Activated CD4-positive, alpha-beta T cell treated with anti-CD3 and anti-CD28 coated beads, Interleukin-2, amount 10 ng/mL, durations not matched to agents 7 days and 5 days (primary cell): ENCODE measurements at regions of chr1 and their contacts with region 1.

Region 1: GRCh38 chr1:116794804-116795481 is 40.7 kb downstream of the CD2 start:
- DNase-seq: no peak
- H3K4me3 Mint-ChIP-seq: no peak overlapping the region
- H3K27ac Mint-ChIP-seq: no peak overlapping the region
- H3K4me1 Mint-ChIP-seq: peaks cover 56% of the 10 kb centered on the region
- H3K27me3 Mint-ChIP-seq: no peaks in the 10 kb centered on the region

Region 2: DNA sequence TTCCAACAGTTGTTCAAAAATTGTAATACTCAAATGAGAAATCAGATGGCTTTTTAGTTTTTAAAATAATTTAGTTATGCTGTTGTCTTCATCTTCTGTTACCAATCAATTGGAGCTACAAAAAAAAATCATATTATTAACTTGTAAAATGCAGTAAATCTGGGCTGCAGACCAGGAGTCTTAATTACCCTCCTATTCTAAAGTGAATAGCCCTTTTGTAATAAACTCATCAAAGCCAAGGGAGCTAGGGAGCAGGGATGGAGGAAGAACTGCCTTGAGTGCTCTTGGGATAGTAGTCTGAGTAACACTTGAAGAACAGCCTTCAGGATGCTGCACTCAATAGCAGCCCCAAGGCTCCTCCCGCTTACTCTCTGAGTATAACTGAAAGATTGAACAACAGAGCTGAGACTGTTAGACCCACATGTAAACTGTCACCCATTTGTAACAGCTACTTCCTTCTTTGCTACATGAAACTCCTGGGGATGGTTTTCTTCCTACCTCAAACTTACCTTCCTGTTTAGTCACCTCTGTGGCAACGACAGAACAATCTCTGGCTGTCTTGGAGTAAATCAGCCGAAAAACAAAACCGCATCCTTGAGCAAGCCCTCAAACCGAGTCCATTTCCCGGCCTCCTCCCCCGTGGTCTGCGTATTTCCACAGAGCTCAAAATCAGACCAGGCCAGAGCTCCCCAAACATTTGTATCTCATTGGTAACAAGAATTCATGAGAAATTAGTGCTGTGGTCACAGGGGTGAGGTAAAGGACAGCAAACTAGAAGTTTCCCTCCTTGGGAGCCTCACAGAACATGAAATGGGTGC is 280.0 kb before region 1 on chr1:
- CTCF ChIA-PET with region 1: no interaction called
- POLR2A ChIA-PET with region 1: no interaction called
- DNase-seq: peak; percentile 71
- H3K4me3 Mint-ChIP-seq: peak overlapping the region; percentile 59
- H3K27ac Mint-ChIP-seq: peak overlapping the region; percentile 89
- H3K4me1 Mint-ChIP-seq: peaks cover 64% of the 10 kb centered on the region
- H3K27me3 Mint-ChIP-seq: no peaks in the 10 kb centered on the region

Region 3: DNA sequence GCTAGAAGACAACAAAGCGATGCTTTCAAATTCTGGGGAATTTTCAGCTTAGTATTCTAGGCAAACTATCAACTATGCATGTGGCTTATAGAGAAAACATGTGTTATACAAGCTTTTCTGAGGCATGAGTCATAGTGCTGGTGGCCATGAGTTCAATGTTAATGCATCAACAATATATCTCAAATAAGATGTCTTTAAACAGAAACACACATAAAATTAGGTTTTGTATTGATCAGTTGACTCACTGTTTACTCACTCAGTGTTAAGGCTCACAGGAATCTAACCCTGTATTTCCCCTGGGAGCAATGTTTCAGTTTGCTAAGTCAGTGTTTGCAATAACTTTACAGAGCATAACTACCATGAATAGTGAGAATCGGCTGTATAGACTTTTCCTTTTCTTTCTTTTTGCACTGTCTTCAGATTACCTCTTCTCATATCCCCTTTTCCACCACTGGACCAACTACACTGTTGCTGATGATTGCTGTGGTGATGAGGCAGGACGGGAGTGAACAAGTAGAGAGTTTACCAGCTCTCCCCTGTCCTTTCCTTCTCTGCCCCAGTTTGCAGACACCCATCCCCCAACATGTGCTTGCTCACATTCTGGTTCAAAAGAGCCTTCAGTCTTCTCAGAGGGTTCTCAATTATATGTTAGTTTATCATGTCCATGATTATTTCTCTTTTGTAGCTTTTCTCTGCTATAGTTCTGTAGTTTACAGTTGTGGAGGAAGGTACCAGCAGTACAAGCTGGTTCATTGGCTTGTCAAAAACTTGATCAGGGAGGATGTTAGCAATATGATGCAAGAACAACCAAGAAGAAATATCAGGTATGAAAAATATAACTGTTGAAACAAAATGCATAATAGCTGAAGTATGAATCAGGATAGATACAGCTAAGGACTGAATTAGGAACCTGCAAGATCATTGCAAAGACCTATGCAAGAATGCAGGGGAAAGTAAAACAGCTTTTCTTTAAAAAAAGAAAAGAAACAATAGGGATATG is 16.8 kb before region 1 on chr1:
- CTCF ChIA-PET with region 1: interaction called, 10 read pairs
- POLR2A ChIA-PET with region 1: no interaction called
- DNase-seq: no peak
- H3K4me3 Mint-ChIP-seq: peak overlapping the region; percentile 6
- H3K27ac Mint-ChIP-seq: peak overlapping the region; percentile 65
- H3K4me1 Mint-ChIP-seq: peaks cover 45% of the 10 kb centered on the region
- H3K27me3 Mint-ChIP-seq: no peaks in the 10 kb centered on the region

Region 4: GRCh38 chr1:116806245-116806644 is 11.3 kb after region 1 on chr1:
- CTCF ChIA-PET with region 1: interaction called, 13 read pairs
- POLR2A ChIA-PET with region 1: no interaction called
- DNase-seq: peak; percentile 52
- H3K4me3 Mint-ChIP-seq: peak overlapping the region; percentile 42
- H3K27ac Mint-ChIP-seq: peak overlapping the region; percentile 90
- H3K4me1 Mint-ChIP-seq: peaks cover 92% of the 10 kb centered on the region
- H3K27me3 Mint-ChIP-seq: no peaks in the 10 kb centered on the region